CD8-positive, alpha-beta T cell (primary cell): ENCODE measurements at regions of chr4 and their contacts with region 1.

Region 1: GRCh38 chr4:103019308-103020124 is at the start of gene SLC9B1:
- DNase-seq: peak; percentile 86 to 96 (median 94)
- ATAC-seq: peak; percentile 92
- H3K4me3 ChIP-seq: peak within 1 kb of the TSS; percentile 70 to 75
- H3K4me3 Mint-ChIP-seq: peak within 1 kb of the TSS; percentile 87
- H3K27ac ChIP-seq: peak within 1 kb of the TSS; percentile 86 to 87
- H3K27ac Mint-ChIP-seq: peak within 1 kb of the TSS; percentile 97
- H3K4me1 ChIP-seq: peaks cover 17% of the 10 kb centered on the region
- H3K4me1 Mint-ChIP-seq: peaks cover 20% of the 10 kb centered on the region
- H3K27me3 ChIP-seq: no peaks in the 10 kb centered on the region
- H3K27me3 Mint-ChIP-seq: no peaks in the 10 kb centered on the region
- CTCF ChIP-seq: no peak
- total RNA-seq, gene SLC9B1: 1.7 to 4.0 TPM

Region 2: DNA sequence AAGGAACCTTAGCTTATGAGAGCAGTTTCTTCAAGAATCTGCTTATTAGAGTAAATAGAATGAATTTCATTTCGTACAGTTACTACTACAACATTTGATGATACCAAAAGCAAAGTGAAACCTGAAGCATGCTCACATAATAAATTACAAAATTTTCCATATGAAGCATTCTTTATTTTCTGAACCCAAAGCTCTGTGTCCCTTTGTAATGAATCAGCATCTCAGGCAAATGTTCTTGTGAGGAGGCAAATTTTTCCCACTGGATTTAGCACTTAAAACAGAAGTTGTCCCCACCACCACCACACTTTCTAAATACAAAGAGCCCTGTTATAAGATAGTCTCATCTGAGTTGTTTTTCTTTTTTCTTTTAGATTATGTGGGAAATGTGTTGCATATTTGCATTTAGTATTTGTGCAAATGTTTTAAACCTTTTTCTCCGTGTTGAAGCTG is 589.0 kb before region 1 on chr4:
- CTCF ChIA-PET with region 1: no interaction called
- POLR2A ChIA-PET with region 1: no interaction called
- intact Hi-C with region 1: loop called in 1 of 2 experiments (anchors 1 kb)
- DNase-seq: peak in 1 of 9 experiments; percentile 19
- ATAC-seq: no peak
- H3K4me3 ChIP-seq: peak overlapping the region; percentile 57 to 58
- H3K4me3 Mint-ChIP-seq: peak overlapping the region; percentile 88
- H3K27ac ChIP-seq: peak overlapping the region; percentile 34 to 55
- H3K27ac Mint-ChIP-seq: no peak overlapping the region
- H3K4me1 ChIP-seq: peaks cover 4% of the 10 kb centered on the region
- H3K4me1 Mint-ChIP-seq: peaks cover 8% of the 10 kb centered on the region
- H3K27me3 ChIP-seq: no peaks in the 10 kb centered on the region
- H3K27me3 Mint-ChIP-seq: no peaks in the 10 kb centered on the region
- CTCF ChIP-seq: no peak

Region 3: GRCh38 chr4:102760645-102761295 is 258.7 kb before region 1 on chr4 and contains the start of gene MANBA:
- CTCF ChIA-PET with region 1: no interaction called
- POLR2A ChIA-PET with region 1: interaction called, 3 read pairs
- intact Hi-C with region 1: loop called in 1 of 2 experiments (anchors 2 kb)
- DNase-seq: peak; percentile 67 to 90 (median 84)
- ATAC-seq: peak; percentile 83
- H3K4me3 ChIP-seq: peak within 1 kb of the TSS; percentile 88 to 93
- H3K4me3 Mint-ChIP-seq: peak within 1 kb of the TSS; percentile 96
- H3K27ac ChIP-seq: peak within 1 kb of the TSS; percentile 62 to 65
- H3K27ac Mint-ChIP-seq: peak within 1 kb of the TSS; percentile 94
- H3K4me1 ChIP-seq: peaks cover 10% of the 10 kb centered on the region
- H3K4me1 Mint-ChIP-seq: peaks cover 42% of the 10 kb centered on the region
- H3K27me3 ChIP-seq: no peaks in the 10 kb centered on the region
- H3K27me3 Mint-ChIP-seq: no peaks in the 10 kb centered on the region
- CTCF ChIP-seq: no peak
- total RNA-seq, gene MANBA: 22.5 to 24.1 TPM

Region 4: DNA sequence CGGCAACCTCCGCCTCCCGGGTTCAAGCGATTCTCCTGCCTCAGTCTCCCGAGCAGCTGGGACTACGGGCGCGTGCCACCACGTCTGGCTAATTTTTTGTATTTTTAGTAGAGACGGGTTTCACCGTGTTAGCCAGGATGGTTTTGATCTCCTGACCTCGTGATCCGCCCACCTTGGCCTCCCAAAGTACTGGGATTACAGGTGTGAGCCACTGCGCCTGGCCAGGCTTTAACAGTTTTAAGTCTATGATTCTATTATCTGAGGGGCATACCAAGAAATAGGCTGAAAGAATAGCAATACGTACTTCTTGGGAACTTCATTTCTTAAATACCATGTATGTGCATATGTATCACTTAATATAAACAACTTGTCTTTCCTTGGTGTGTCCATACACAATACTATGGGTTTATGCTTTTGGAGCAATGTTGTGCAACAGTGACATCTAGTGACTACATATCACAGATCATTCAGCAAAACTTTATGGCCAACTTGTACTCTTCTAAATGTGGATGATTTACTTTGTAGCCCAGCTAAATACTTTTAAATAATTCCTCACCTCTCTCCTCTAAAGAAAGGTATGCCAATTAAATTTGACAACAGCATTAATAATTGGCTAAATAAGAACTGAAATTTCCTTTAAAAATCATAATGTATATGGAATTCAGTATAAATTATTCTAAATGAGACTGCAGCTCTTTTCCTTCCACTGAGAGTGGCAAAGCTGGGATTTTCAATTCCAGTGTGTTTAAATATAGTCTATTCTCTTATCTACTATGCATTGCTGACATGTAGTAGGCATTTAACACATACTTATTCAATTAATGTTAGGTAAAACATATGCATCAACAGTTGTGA is 10.4 kb before region 1 on chr4:
- CTCF ChIA-PET with region 1: interaction called, 7 read pairs
- POLR2A ChIA-PET with region 1: interaction called, 3 read pairs
- intact Hi-C with region 1: loop called in 1 of 2 experiments (anchors 1 kb)
- DNase-seq: peak in 3 of 9 experiments; percentile 19 to 82 (median 75)
- ATAC-seq: peak; percentile 97
- H3K4me3 ChIP-seq: no peak overlapping the region
- H3K4me3 Mint-ChIP-seq: no peak overlapping the region
- H3K27ac ChIP-seq: no peak overlapping the region
- H3K27ac Mint-ChIP-seq: no peak overlapping the region
- H3K4me1 ChIP-seq: no peaks in the 10 kb centered on the region
- H3K4me1 Mint-ChIP-seq: peaks cover 2% of the 10 kb centered on the region
- H3K27me3 ChIP-seq: no peaks in the 10 kb centered on the region
- H3K27me3 Mint-ChIP-seq: no peaks in the 10 kb centered on the region
- CTCF ChIP-seq: peak; percentile 85

Region 5: DNA sequence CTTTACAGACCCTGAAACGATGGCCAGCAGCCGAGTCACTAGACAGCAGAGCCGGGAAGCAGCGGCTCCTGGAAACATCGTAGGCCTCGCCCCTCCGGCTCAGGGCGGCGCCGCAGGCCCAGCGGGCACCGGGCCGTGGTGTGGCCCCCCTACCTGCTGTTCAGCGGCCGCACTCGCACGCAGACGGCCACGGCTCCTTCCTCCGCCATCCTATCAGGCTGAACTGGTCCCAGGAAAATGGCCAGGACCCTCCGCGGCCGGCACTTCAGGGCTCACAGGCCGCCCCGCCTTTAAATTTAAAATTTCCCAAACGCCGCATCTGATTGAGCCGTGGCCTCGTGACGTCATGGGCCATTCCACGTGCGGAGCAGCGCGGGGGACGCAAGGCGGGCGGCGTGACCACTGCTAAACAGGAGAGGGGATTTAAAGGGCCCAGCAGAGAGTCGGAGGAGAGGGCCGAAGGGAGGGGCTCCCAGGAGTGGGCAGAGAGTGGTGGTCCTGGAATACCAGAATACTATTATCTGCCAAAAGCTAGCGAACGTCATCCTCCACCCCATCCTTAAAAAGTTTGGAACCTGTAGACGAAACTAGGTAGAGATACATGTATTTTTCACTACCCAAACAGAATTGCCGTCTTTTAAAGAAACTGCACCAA is 178.7 kb after region 1 on chr4 and contains the start of gene CENPE:
- CTCF ChIA-PET with region 1: no interaction called
- POLR2A ChIA-PET with region 1: no interaction called
- intact Hi-C with region 1: loop called (anchors 1 to 5 kb)
- DNase-seq: peak; percentile 76 to 92 (median 84)
- ATAC-seq: peak; percentile 84
- H3K4me3 ChIP-seq: peak within 1 kb of the TSS; percentile 72 to 81
- H3K4me3 Mint-ChIP-seq: peak within 1 kb of the TSS; percentile 98
- H3K27ac ChIP-seq: peak within 1 kb of the TSS; percentile 85 to 87
- H3K27ac Mint-ChIP-seq: peak within 1 kb of the TSS; percentile 99
- H3K4me1 ChIP-seq: peaks cover 11% of the 10 kb centered on the region
- H3K4me1 Mint-ChIP-seq: peaks cover 12% of the 10 kb centered on the region
- H3K27me3 ChIP-seq: no peaks in the 10 kb centered on the region
- H3K27me3 Mint-ChIP-seq: no peaks in the 10 kb centered on the region
- CTCF ChIP-seq: no peak
- total RNA-seq, gene CENPE: 0.97 to 3.1 TPM

Region 6: DNA sequence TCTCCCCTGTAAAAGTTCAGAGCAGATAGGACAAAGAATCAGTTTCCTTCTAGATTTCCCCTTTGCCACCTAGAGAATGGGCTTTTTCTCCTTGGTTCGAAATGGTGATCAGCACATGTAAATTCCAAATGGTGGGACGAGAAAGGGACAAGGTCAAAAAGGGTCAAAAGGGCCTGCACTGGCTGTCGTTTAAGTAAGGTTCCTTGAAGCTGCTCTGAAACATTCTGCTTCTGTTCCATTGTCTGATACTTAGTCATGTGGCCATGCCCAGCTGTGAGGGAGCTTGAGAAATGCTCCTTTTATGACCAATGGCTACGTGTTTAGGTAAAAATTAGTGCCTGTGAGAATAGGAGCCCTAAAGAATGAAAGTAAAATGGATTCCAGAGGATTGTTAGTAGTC is 344.6 kb after region 1 on chr4:
- CTCF ChIA-PET with region 1: no interaction called
- POLR2A ChIA-PET with region 1: no interaction called
- intact Hi-C with region 1: no loop called
- DNase-seq: no peak
- ATAC-seq: no peak
- H3K4me3 ChIP-seq: no peak overlapping the region
- H3K4me3 Mint-ChIP-seq: no peak overlapping the region
- H3K27ac ChIP-seq: no peak overlapping the region
- H3K27ac Mint-ChIP-seq: no peak overlapping the region
- H3K4me1 ChIP-seq: no peaks in the 10 kb centered on the region
- H3K4me1 Mint-ChIP-seq: no peaks in the 10 kb centered on the region
- H3K27me3 ChIP-seq: no peaks in the 10 kb centered on the region
- H3K27me3 Mint-ChIP-seq: no peaks in the 10 kb centered on the region
- CTCF ChIP-seq: no peak